Mammary epithelial cell (primary cell): ENCODE measurements at regions of chr10 and their contacts with region 1.

Region 1: DNA sequence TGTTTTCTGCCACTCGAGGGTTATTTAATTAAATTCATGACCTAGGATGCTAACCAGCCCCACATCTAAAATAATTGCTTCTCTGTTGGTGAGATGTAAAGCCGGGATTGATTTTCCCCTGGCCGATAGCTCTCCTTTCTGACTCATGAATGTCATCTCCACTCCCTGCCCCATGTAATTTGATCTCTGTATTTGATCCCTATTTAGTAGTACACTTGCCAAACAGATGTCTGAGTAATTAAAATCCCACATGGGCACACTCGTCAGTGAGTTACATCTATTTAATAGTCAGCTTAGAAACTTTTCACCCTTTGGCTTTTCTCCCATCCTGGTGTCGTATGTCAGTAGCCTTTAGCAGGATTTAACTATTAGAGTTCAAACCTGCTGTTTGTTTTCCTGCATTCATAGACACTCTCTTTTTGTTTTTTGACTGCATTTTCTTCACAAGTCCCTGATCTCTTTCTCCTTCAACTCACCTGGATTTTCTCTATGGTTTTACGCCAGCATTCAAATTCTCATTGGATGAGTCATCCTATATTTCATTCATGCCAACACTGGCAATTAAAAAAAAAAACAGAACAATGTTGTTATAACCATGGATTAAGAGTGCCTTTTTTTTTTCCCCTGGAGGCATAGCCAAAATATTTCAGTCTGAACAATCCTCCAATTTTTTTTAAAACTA is 82.7 kb downstream of the SPAG6 start:
- DNase-seq: peak; percentile 90
- H3K4me3 ChIP-seq: no peak overlapping the region
- H3K27ac ChIP-seq: peak overlapping the region; percentile 82
- H3K4me1 ChIP-seq: peaks cover 31% of the 10 kb centered on the region
- H3K27me3 ChIP-seq: no peaks in the 10 kb centered on the region
- CTCF ChIP-seq: no peak

Region 2: GRCh38 chr10:21525367-21526183 is 902.5 kb before region 1 on chr10 and contains the start of gene SKIDA1:
- CTCF ChIA-PET with region 1: no interaction called
- dilution Hi-C with region 1: no loop called
- in situ Hi-C with region 1: no loop called
- intact Hi-C with region 1: loop called (anchors 10 kb)
- DNase-seq: peak; percentile 78
- H3K4me3 ChIP-seq: peak within 1 kb of the TSS; percentile 54 to 75 (median 68)
- H3K27ac ChIP-seq: peak within 1 kb of the TSS; percentile 92
- H3K4me1 ChIP-seq: peaks cover 22% of the 10 kb centered on the region
- H3K27me3 ChIP-seq: no peaks in the 10 kb centered on the region
- CTCF ChIP-seq: no peak
- total RNA-seq, gene SKIDA1: 1.3 to 1.5 TPM

Region 3: GRCh38 chr10:21934307-21934706 is 493.7 kb before region 1 on chr10:
- CTCF ChIA-PET with region 1: no interaction called
- dilution Hi-C with region 1: no loop called
- in situ Hi-C with region 1: no loop called
- intact Hi-C with region 1: no loop called
- DNase-seq: peak; percentile 20
- H3K4me3 ChIP-seq: no peak overlapping the region
- H3K27ac ChIP-seq: peak overlapping the region; percentile 49
- H3K4me1 ChIP-seq: peaks cover 6% of the 10 kb centered on the region
- H3K27me3 ChIP-seq: no peaks in the 10 kb centered on the region
- CTCF ChIP-seq: no peak

Region 4: DNA sequence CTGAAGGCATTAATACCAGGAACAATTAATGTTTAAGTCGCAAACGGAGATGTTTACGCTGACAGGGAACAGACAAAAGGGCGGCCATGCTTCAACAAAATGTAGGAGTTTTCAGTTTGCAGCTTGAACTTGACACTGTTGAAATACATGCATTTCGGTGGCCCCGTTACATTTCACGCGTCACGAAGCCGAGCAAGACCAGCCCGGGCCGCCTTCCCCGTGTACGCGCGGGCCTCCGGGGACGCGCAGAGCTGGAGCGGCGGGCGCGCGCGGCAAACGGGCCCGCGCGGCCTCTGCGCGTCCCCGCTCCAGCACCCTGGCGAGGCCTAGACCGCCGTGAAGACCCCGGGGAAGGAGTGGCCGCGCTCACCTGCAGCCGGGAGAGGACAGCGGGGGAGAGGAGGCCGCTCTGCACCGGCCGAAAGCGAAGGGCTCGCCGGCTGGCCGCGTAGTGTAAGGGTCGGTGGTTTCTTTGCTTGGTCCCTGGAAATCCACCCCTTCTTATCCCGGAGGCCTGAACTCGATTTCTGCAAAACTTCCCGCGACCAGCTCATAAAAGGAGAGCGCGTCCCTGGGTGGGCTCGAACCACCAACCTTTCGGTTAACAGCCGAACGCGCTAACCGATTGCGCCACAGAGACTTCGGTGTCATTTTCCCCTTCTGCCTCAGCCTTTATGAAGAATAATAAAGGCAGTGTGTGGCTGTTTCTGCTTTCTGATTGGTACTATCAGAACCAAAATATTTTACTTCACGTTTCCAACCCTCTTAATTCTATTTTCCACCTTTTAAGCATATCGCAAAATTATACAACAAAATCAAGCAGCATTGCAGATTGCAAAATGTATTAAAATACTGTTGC is 198.9 kb before region 1 on chr10:
- CTCF ChIA-PET with region 1: no interaction called
- dilution Hi-C with region 1: no loop called
- in situ Hi-C with region 1: no loop called
- intact Hi-C with region 1: loop called (anchors 5 kb)
- DNase-seq: peak; percentile 89
- H3K4me3 ChIP-seq: peak overlapping the region; percentile 74 to 90 (median 88)
- H3K27ac ChIP-seq: peak overlapping the region; percentile 15
- H3K4me1 ChIP-seq: no peaks in the 10 kb centered on the region
- H3K27me3 ChIP-seq: peaks cover 3% of the 10 kb centered on the region
- CTCF ChIP-seq: no peak

Region 5: DNA sequence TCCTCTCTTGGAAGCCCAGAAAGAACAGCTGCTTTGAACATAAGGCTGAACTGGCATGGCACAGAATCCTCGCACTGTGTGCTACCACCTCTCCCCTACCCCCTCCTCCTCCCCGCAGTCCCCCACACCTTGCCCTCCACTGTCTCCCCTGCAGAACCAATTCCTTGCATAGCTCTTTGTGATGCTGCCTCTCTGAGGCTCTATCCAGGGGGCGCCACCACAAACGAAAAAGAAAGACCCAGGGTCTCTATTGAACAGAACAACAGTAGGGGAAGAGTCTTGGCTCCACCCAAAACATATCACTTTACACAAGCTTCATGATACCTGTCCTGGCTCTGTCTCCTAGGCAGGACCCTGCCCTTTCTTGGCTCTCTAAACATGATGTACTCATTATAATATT is 184.0 kb before region 1 on chr10:
- CTCF ChIA-PET with region 1: no interaction called
- dilution Hi-C with region 1: no loop called
- in situ Hi-C with region 1: no loop called
- intact Hi-C with region 1: loop called (anchors 5 kb)
- DNase-seq: no peak
- H3K4me3 ChIP-seq: no peak overlapping the region
- H3K27ac ChIP-seq: no peak overlapping the region
- H3K4me1 ChIP-seq: peaks cover 17% of the 10 kb centered on the region
- H3K27me3 ChIP-seq: no peaks in the 10 kb centered on the region
- CTCF ChIP-seq: no peak

Region 6: DNA sequence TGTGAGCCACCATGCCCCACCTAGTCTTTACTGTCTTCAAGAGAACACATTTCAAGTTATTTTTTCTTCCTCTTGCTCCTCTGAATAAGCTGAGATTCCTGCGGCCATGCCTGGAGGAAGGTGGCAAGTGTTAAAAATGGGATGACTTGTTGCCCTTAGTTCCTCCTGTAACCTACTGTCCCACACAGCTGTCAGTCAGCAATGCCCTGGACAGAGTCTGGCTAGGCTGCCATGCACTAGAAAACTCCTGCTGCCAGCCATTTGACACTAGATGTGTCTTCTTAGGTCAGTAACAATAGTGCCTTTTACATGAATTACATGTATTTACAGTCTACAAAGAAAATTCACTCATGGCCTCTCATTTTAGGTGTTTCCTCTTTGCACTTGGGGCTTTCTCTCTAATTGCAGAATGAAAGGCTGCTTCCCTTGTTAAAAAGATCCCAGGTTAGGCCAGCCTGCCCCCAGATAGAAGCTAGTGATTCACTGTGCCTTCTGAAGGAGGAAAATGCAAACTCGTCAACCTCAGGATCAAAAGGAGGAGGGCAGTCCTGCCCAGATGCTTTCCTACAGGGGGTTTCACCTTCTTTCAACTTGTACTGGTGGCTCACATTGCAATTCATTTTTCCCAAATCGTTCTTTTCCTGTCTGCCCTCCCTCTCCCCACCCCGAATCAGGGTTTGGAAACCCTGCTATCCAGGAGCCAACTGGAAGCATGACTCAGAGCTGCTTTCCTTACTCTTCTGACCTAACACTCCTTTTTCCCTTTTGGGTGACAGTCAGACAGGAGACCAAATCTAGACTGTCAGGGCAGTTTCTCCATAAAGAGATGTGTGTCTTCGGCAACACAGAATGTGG is 53.9 kb after region 1 on chr10:
- CTCF ChIA-PET with region 1: no interaction called
- dilution Hi-C with region 1: no loop called
- in situ Hi-C with region 1: no loop called
- intact Hi-C with region 1: loop called (anchors 10 kb)
- DNase-seq: peak; percentile 17
- H3K4me3 ChIP-seq: no peak overlapping the region
- H3K27ac ChIP-seq: no peak overlapping the region
- H3K4me1 ChIP-seq: no peaks in the 10 kb centered on the region
- H3K27me3 ChIP-seq: peaks cover 12% of the 10 kb centered on the region
- CTCF ChIP-seq: no peak

Region 7: GRCh38 chr10:23067939-23068775 is 640.1 kb after region 1 on chr10:
- CTCF ChIA-PET with region 1: no interaction called
- dilution Hi-C with region 1: no loop called
- in situ Hi-C with region 1: no loop called
- intact Hi-C with region 1: loop called (anchors 10 kb)
- DNase-seq: peak; percentile 51
- H3K4me3 ChIP-seq: no peak overlapping the region
- H3K27ac ChIP-seq: no peak overlapping the region
- H3K4me1 ChIP-seq: no peaks in the 10 kb centered on the region
- H3K27me3 ChIP-seq: no peaks in the 10 kb centered on the region
- CTCF ChIP-seq: peak; percentile 78 to 90